A673 (cell line): ENCODE measurements at regions of chr12 and their contacts with region 1.

Region 1: GRCh38 chr12:48263617-48264016 is 60.5 kb upstream of the OR10AD1 start:
- DNase-seq: peak; percentile 30
- H3K4me3 ChIP-seq: no peak overlapping the region
- H3K27ac ChIP-seq: no peak overlapping the region
- H3K4me1 ChIP-seq: peaks cover 11% of the 10 kb centered on the region
- H3K27me3 ChIP-seq: no peaks in the 10 kb centered on the region
- CTCF ChIP-seq: no peak

Region 2: DNA sequence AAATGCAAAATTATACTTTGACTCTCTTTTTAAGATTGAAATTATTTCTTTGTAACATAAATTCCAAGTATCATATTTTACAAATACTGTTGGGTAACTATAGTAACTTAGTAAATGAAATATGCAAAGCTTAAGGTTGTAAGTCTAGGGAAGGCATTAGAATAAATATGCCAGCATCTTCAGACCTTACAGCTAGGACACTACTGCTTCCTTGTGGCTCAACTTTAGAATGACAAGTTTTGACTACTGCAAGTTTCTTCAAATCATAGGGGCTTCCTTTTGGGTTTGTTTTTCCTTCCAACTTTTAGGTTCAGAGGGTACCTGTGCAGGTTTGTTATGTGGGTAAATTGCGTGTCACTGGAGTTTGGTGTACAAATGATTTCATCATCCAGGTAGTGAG is 191.1 kb after region 1 on chr12:
- CTCF ChIA-PET with region 1: no interaction called
- POLR2A ChIA-PET with region 1: no interaction called
- intact Hi-C with region 1: loop called (anchors 10 kb)
- DNase-seq: peak; percentile 53
- H3K4me3 ChIP-seq: no peak overlapping the region
- H3K27ac ChIP-seq: no peak overlapping the region
- H3K4me1 ChIP-seq: no peaks in the 10 kb centered on the region
- H3K27me3 ChIP-seq: no peaks in the 10 kb centered on the region
- CTCF ChIP-seq: peak; percentile 58

Region 3: GRCh38 chr12:48512855-48513254 is 249.2 kb after region 1 on chr12:
- CTCF ChIA-PET with region 1: no interaction called
- POLR2A ChIA-PET with region 1: no interaction called
- intact Hi-C with region 1: no loop called
- DNase-seq: no peak
- H3K4me3 ChIP-seq: no peak overlapping the region
- H3K27ac ChIP-seq: no peak overlapping the region
- H3K4me1 ChIP-seq: no peaks in the 10 kb centered on the region
- H3K27me3 ChIP-seq: peaks cover 14% of the 10 kb centered on the region
- CTCF ChIP-seq: no peak

Region 4: GRCh38 chr12:48602192-48602989 is 338.8 kb after region 1 on chr12:
- CTCF ChIA-PET with region 1: no interaction called
- POLR2A ChIA-PET with region 1: no interaction called
- intact Hi-C with region 1: no loop called
- DNase-seq: no peak
- H3K4me3 ChIP-seq: no peak overlapping the region
- H3K27ac ChIP-seq: no peak overlapping the region
- H3K4me1 ChIP-seq: no peaks in the 10 kb centered on the region
- H3K27me3 ChIP-seq: no peaks in the 10 kb centered on the region
- CTCF ChIP-seq: no peak

Region 5: DNA sequence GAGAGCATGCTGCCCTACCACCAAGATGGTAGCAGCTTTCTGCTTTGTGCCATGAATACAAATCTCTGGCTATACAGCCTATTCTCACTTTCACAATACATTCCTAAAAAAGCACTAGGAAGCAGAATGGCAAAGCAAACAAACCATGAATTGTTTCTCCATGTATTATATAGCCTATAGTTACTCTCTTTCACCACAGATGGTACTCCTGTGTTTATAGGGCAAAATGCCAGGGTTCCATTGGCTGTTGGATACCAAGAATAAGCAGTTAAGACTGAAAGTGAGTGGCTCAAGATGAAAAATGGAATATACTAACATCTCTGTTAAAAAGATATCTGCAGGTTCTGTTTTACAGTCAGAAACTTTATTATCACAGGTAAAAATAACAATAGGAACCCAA is 682.6 kb after region 1 on chr12:
- CTCF ChIA-PET with region 1: no interaction called
- POLR2A ChIA-PET with region 1: no interaction called
- intact Hi-C with region 1: no loop called
- DNase-seq: no peak
- H3K4me3 ChIP-seq: no peak overlapping the region
- H3K27ac ChIP-seq: no peak overlapping the region
- H3K4me1 ChIP-seq: no peaks in the 10 kb centered on the region
- H3K27me3 ChIP-seq: no peaks in the 10 kb centered on the region
- CTCF ChIP-seq: no peak